Activated CD4-positive, alpha-beta memory T cell treated with anti-CD3 and anti-CD28 coated beads, Interleukin-2, amount 10 ng/mL, durations not matched to agents 7 days and 5 days (primary cell): ENCODE measurements at regions of chr16 and their contacts with region 1.

Region 1: GRCh38 chr16:50335196-50335958 is 33.4 kb downstream of the BRD7 start:
- DNase-seq: peak; percentile 66
- H3K4me3 Mint-ChIP-seq: peak overlapping the region; percentile 29
- H3K27ac Mint-ChIP-seq: peak overlapping the region; percentile 95
- H3K4me1 Mint-ChIP-seq: peaks cover 82% of the 10 kb centered on the region
- H3K27me3 Mint-ChIP-seq: no peaks in the 10 kb centered on the region

Region 2: DNA sequence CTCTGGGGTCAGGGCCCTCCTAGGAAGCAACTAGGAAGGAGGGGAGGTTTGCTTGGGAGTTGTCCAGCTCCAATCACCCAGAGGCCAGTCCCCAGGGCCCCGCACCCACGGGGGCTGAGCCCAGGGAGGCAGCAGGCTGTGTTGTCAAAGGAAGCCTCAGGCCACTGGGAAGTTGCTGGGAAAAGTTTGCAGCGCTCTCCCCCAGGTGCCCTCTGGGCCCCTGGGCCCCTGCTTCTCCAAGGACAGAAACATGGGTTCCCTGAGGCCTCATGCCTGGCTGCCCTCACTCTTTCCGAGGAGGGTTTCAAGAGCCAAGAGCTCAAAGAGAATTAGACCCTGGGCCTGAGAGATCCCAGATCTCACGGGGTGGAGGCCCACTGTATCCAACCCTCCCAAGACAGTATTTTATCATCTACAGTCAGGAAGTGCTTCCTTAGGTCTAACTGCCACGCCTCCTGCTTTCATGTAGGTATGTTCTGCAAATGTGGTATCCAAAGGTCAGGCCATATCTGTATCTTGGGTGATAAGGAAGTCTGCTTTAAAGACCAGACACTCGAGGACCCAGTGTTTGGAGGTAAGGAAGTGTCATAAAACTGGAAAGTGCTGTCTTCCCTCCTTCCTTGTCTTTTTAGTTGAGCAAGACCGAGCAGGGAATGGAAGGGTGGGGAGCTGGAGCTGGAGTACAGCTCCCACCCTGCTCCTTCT is 435.2 kb before region 1 on chr16:
- CTCF ChIA-PET with region 1: no interaction called
- POLR2A ChIA-PET with region 1: no interaction called
- DNase-seq: no peak
- H3K4me3 Mint-ChIP-seq: no peak overlapping the region
- H3K27ac Mint-ChIP-seq: no peak overlapping the region
- H3K4me1 Mint-ChIP-seq: no peaks in the 10 kb centered on the region
- H3K27me3 Mint-ChIP-seq: no peaks in the 10 kb centered on the region

Region 3: GRCh38 chr16:50266337-50267091 is 68.9 kb before region 1 on chr16 and contains the start of gene ADCY7:
- CTCF ChIA-PET with region 1: interaction called, 4 read pairs
- POLR2A ChIA-PET with region 1: interaction called, 12 read pairs
- DNase-seq: peak; percentile 89
- H3K4me3 Mint-ChIP-seq: peak within 1 kb of the TSS; percentile 89
- H3K27ac Mint-ChIP-seq: peak within 1 kb of the TSS; percentile 91
- H3K4me1 Mint-ChIP-seq: peaks cover 82% of the 10 kb centered on the region
- H3K27me3 Mint-ChIP-seq: no peaks in the 10 kb centered on the region
- total RNA-seq, gene ADCY7: 266 to 270 TPM

Region 4: DNA sequence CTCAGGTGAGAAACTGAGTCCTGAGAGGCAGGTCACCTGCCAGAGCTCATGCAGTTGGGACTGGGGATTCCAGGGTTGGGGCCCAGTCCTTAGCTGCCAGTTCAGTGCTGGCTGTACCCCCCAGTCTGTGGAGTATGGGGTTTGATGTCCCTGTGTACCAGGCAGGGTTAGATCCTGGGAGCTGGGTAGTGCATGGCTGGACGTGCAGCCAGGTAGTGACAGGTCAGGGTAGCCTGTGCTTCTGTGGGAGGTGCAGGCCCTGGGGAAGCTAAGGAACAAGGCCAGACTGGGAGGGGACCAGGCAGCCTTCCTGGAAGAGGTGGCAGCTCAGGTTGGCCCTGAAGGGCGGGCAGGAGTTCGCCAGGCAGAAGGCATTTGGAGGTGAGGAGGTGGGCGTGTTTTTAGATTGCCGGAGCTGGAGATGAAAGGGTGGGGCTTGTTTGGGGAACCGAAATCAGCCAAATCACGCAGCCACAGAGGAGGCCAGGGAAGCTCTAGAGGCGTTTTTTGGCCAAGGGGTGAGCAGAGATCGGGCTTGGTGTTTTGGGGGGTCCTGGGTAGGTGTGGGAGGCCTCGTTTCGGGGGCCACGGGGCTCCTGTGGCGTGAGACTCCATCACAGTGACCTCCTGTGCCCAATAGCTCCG is 61.6 kb before region 1 on chr16:
- CTCF ChIA-PET with region 1: no interaction called
- POLR2A ChIA-PET with region 1: interaction called, 46 read pairs
- DNase-seq: peak; percentile 60
- H3K4me3 Mint-ChIP-seq: peak overlapping the region; percentile 88
- H3K27ac Mint-ChIP-seq: peak overlapping the region; percentile 98
- H3K4me1 Mint-ChIP-seq: peaks cover 98% of the 10 kb centered on the region
- H3K27me3 Mint-ChIP-seq: no peaks in the 10 kb centered on the region

Region 5: GRCh38 chr16:50354629-50355456 is 19.5 kb after region 1 on chr16:
- CTCF ChIA-PET with region 1: interaction called, 364 read pairs
- POLR2A ChIA-PET with region 1: interaction called, 86 read pairs
- DNase-seq: no peak
- H3K4me3 Mint-ChIP-seq: no peak overlapping the region
- H3K27ac Mint-ChIP-seq: no peak overlapping the region
- H3K4me1 Mint-ChIP-seq: peaks cover 30% of the 10 kb centered on the region
- H3K27me3 Mint-ChIP-seq: no peaks in the 10 kb centered on the region

Region 6: DNA sequence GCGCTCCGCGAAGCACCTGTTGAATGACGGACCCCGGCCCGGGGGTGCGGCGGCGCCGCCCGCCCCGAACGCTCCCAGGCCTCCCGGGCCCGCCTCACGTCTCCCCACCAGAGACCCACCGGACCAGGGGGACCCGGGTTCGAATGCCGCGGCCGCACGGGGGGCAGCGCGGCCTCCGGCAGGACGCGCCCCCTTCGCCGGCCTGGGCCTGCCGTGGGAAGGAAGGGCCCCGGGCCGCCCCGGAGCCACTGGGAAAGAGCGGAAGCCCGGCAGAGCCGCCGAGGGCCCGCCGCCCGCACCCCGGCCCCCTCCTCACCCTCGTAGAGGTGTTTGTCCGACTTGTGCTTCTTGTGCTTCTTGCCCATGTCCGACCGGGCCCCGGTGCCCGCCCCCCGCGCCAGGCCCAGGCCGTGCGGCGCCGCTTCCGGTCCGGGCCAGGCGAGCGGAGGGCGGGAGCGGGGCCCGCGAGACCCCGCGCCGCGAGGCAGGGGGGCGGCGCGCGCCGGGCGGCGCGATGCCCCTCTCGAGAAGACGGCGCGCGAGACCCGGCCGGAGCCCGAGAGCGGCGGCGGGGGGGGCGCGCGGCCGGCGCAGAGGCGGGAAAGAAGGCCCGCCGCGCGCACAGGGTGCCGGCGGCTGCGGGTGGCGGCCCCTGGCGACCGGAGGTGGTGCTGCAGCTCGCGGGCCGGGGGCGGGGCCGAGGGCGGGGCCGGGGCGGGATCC is 33.2 kb after region 1 on chr16 and contains the start of gene BRD7:
- CTCF ChIA-PET with region 1: no interaction called
- POLR2A ChIA-PET with region 1: interaction called, 14 read pairs
- DNase-seq: peak; percentile 80
- H3K4me3 Mint-ChIP-seq: peak within 1 kb of the TSS; percentile 85
- H3K27ac Mint-ChIP-seq: peak within 1 kb of the TSS; percentile 71
- H3K4me1 Mint-ChIP-seq: peaks cover 46% of the 10 kb centered on the region
- H3K27me3 Mint-ChIP-seq: peaks cover 4% of the 10 kb centered on the region
- total RNA-seq, gene BRD7: 93.3 to 101 TPM

Region 7: DNA sequence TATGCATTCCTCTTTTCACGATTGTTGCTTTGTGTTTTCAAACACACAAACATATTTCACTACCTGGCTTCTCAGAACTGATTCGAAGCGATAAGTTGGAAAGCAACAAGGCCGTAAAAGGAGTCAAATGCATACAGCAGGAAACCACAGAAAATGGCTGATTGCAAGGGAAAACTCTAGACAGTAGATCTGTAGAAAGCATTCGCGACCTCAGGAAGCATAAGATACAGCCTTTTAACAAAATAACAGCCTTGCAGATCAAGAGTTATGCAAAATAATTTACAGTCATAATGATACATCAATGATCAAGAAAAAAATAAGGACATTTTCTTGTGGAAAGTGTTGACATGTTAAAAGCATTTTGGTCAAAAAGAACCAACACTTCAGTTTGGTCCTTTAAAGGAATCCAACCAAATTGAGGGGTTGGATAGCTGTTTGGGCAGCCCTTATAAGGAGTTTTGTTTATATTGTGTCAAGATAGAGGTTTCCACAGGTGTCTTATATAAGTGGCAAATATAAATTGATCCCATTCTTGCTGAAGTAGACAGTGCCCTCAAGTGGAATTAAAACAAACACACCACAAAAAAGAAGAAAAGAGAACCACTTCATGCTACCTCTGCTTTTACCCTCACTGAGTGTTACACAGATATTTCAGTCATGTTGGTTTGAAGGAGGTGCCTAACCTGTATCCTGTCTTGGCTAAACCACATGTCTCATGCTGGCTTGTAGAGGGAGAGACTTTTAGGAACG is 412.0 kb after region 1 on chr16:
- CTCF ChIA-PET with region 1: no interaction called
- POLR2A ChIA-PET with region 1: interaction called, 29 read pairs
- DNase-seq: peak; percentile 35
- H3K4me3 Mint-ChIP-seq: peak overlapping the region; percentile 75
- H3K27ac Mint-ChIP-seq: peak overlapping the region; percentile 97
- H3K4me1 Mint-ChIP-seq: peaks cover 60% of the 10 kb centered on the region
- H3K27me3 Mint-ChIP-seq: no peaks in the 10 kb centered on the region